ENCODE measurements at regions of chr20 and their contacts with region 1.

Region 1: GRCh38 chr20:48828022-48828743 is 384 bp upstream of the PREX1 start:
- DNase-seq: peak; percentile 94
- CTCF ChIP-seq: no peak

Region 2: GRCh38 chr20:48841847-48842529 is 13.8 kb after region 1 on chr20:
- CTCF ChIA-PET with region 1: interaction called, 25 read pairs
- POLR2A ChIA-PET with region 1: interaction called, 3 read pairs
- DNase-seq: no peak
- CTCF ChIP-seq: no peak